HEK293 (cell line): ENCODE measurements at regions of chr3 and their contacts with region 1.

Region 1: DNA sequence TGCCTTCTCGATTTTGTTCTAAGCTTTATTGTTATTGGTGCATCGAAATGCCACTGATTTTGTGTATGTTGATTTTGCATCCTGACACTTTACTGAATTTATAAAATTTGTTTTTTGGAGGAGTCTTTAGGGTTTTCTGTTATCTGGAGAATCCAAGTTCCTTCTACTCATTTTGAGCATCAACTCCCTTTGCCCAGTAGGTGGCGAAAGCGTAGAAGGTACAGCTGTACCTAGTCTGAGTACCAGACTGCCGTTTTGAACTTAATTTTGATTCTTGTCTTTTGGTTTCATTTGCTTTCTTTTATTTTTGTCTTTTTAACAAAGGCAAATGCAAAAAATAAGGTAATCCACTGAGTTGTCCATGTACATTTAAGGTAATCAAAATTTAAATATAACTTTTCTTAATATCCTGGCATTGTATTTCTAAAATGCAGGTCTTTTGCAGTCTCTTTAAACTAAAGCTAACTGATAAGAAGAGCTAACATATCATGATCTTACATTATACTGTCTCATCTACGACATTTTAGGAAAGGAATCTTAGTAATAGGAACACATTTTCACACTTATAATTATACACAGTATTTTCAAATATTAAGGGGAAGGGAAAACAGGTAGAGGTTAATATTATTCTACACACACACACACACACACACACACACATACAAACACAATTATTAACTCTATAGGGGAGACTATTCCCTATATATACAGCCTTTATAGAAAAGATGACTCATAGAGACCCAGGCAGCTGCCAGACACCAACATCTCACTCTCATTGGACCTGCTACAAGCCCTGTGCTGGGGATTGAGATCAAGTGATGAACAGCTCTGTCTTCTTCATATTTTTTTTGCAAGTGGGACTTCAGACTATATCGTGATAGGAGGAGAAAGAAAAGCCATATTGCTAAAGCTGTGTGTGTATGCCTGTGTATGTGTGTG is 71.7 kb downstream of the SYNPR start:
- H3K4me3 ChIP-seq: no peak overlapping the region
- H3K27ac ChIP-seq: no peak overlapping the region
- H3K4me1 ChIP-seq: no peaks in the 10 kb centered on the region
- CTCF ChIP-seq: 0 out of 2 replicates have a peak, but pooled peaks have one; percentile 16

Region 2: GRCh38 chr3:63631670-63632069 is 281.8 kb after region 1 on chr3:
- CTCF ChIA-PET with region 1: no interaction called
- POLR2A ChIA-PET with region 1: no interaction called
- H3K4me3 ChIP-seq: no peak overlapping the region
- H3K27ac ChIP-seq: no peak overlapping the region
- H3K4me1 ChIP-seq: no peaks in the 10 kb centered on the region
- CTCF ChIP-seq: no peak

Region 3: GRCh38 chr3:63818281-63819150 is 468.7 kb after region 1 on chr3:
- CTCF ChIA-PET with region 1: interaction called, 56 read pairs
- POLR2A ChIA-PET with region 1: no interaction called
- H3K4me3 ChIP-seq: no peak overlapping the region
- H3K27ac ChIP-seq: no peak overlapping the region
- H3K4me1 ChIP-seq: peaks cover 3% of the 10 kb centered on the region; the same call in 1 of the 2 replicates
- CTCF ChIP-seq: 0 out of 2 replicates have a peak, but pooled peaks have one; percentile 31